Natural killer cell (primary cell): ENCODE measurements at regions of chr1 and their contacts with region 1.

Region 1: DNA sequence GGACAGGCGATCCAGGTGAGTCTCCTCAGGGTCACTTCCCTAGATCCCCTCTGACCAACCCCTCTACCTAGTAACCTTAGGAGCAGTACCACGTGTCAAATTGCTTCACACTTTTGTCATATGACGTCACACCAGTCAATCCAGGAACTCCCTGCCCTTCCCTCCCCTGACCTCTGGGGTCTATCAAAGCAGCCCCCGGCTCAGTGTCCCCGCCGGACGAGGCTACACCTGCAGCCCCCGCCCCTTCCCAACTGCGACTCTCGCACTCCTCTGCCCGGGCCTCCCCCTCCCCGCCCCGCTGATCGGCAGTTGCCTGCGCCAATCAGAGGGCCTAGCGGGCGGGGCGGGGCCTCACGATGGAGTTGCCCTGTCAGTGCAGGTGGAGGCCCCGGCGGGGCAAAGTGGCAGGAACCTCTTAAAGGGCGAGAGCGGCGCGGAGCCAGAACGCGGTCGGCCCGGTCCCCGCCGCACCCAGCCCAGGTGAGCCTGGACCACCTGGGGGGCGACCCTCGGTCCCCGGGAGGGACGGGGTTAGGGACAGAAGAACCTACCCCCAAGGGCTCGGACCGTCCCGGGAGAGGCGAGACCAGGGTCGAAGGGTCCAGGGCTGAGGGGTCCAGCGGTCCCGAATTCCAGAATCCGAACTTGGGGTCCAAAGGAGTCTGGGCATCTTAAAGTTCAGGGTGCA is 27.5 kb upstream of the EPB41 start:
- DNase-seq: peak; percentile 93 to 94
- ATAC-seq: peak; percentile 68 to 84 (median 74)
- H3K4me3 ChIP-seq: peak overlapping the region; percentile 97
- H3K4me3 Mint-ChIP-seq: peak overlapping the region; percentile 89
- H3K27ac ChIP-seq: peak overlapping the region; percentile 84
- H3K27ac Mint-ChIP-seq: peak overlapping the region; percentile 88 to 93
- H3K4me1 ChIP-seq: peaks cover 41% of the 10 kb centered on the region
- H3K4me1 Mint-ChIP-seq: peaks cover 53 to 63% of the 10 kb centered on the region in 2 donors
- H3K27me3 ChIP-seq: no peaks in the 10 kb centered on the region
- H3K27me3 Mint-ChIP-seq: no peaks in the 10 kb centered on the region
- CTCF ChIP-seq: no peak

Region 2: DNA sequence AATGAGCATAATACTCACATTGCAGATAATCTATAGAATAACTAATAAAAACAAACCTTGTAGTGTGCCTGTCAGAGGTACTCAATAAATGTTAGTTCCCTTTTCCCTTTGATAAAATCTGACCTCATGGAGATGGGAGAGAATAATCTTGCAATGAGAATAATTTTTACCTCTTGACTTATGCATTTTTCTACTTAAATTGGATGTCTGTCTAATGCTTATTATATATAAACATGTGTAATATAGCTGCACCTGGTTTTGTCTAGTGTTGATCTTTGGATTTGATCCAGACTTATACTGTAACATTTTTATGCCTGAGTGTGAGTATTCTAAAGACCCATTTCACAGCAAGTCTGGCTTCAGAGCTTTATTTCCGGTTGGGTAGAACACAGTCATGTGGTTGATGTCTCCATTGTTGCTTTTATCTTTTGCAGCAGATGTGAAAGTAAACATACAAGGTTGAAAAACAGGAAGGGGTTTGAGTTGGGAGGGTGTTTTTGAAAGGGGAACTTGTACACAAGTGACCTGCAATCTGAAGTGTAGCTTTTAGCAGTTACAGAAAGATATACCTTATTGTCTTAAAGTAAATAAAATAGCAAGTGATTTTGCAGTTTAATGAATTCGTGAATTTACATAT is 39.9 kb after region 1 on chr1:
- intact Hi-C with region 1: loop called (anchors 1 kb)
- DNase-seq: peak in 1 of 2 donors; percentile 89
- ATAC-seq: peak; percentile 85 to 94 (median 91)
- H3K4me3 ChIP-seq: peak overlapping the region; percentile 20
- H3K4me3 Mint-ChIP-seq: peak overlapping the region; percentile 87
- H3K27ac ChIP-seq: peak overlapping the region; percentile 80
- H3K27ac Mint-ChIP-seq: peak overlapping the region; percentile 89 to 98
- H3K4me1 ChIP-seq: peaks cover 58% of the 10 kb centered on the region
- H3K4me1 Mint-ChIP-seq: peaks cover 44 to 49% of the 10 kb centered on the region in 2 donors
- H3K27me3 ChIP-seq: no peaks in the 10 kb centered on the region
- H3K27me3 Mint-ChIP-seq: no peaks in the 10 kb centered on the region
- CTCF ChIP-seq: no peak

Region 3: DNA sequence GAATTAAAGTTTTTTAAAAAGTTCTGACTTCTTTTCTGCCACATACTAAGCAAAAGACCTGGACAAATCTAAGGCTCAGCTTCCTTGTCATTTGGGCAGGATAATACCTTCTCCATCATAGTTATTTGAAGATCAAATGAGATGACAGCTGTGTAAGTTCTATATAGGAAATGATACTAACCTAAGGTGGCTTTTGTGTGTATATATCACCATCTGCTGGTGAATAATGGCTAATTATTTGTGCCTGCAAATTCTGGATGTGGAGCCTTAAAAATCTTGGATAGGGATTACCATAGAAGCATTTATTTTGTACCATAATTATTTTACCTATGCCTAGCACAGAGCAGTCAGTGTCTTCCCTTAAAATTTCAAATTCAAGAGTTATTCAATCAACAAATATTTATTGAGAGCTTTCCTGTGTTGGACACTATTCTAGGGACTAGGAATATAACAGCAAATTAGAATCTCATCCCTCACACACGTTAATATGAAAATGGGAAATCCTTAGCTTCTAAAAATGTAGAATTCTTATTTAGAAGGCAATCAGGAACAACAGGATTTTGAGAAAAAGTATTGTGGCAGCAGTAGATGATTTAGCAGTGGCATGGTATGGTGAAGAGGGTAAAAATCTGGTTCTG is 147.1 kb after region 1 on chr1:
- intact Hi-C with region 1: loop called (anchors 1 kb)
- DNase-seq: peak in 1 of 2 donors; percentile 65
- ATAC-seq: peak; percentile 69 to 85 (median 69)
- H3K4me3 ChIP-seq: no peak overlapping the region
- H3K4me3 Mint-ChIP-seq: no peak overlapping the region
- H3K27ac ChIP-seq: no peak overlapping the region
- H3K27ac Mint-ChIP-seq: peak overlapping the region; percentile 60 to 77
- H3K4me1 ChIP-seq: no peaks in the 10 kb centered on the region
- H3K4me1 Mint-ChIP-seq: peaks cover 4 to 7% of the 10 kb centered on the region in 2 donors
- H3K27me3 ChIP-seq: no peaks in the 10 kb centered on the region
- H3K27me3 Mint-ChIP-seq: no peaks in the 10 kb centered on the region
- CTCF ChIP-seq: peak; percentile 78

Region 4: DNA sequence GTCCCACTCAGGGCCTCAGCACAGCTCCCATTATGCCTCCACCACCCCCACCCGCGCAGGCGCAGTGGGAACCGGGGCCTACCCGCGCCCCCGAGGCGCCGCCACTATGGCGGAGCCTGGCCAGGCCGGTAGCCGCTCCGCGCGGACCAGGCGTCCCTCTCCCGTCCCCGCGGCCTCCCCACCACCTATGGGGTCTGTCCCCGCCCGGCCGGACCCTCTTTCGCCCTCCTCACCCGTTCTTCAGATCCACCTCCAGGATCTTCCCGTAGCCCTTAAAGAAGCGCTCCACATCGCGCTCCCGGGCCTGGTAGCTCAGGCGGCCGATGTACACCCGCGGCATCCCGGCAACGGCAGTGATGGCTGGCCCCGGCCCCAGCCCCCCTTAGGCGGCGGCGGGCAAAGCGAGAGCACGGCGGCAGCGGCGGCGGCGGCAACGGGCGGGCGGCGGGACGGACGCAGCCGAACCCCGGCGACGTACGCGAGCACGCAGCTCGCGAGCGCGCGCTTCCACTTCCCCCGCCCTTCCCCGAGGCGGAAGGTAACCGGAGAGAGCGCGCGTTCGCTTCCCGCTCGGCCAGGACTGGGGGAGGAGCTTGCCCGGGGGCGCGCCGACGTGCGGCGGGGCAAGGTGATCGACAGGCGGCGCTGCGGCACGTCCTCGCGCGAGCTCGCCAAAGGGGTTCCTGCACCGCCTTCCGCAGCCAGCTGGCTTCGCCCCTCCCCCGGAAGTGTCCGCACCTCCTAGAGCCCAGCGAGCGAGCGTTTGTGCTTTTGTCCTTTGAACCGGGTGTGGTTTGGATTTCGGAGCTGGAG is 294.7 kb after region 1 on chr1 and contains the start of gene SRSF4:
- intact Hi-C with region 1: loop called (anchors 5 kb)
- DNase-seq: peak; percentile 99
- ATAC-seq: peak; percentile 91 to 98 (median 91)
- H3K4me3 ChIP-seq: peak within 1 kb of the TSS; percentile 100
- H3K4me3 Mint-ChIP-seq: peak within 1 kb of the TSS; percentile 93
- H3K27ac ChIP-seq: peak within 1 kb of the TSS; percentile 100
- H3K27ac Mint-ChIP-seq: peak within 1 kb of the TSS; percentile 94 to 95
- H3K4me1 ChIP-seq: peaks cover 30% of the 10 kb centered on the region
- H3K4me1 Mint-ChIP-seq: peaks cover 38 to 42% of the 10 kb centered on the region in 2 donors
- H3K27me3 ChIP-seq: no peaks in the 10 kb centered on the region
- H3K27me3 Mint-ChIP-seq: no peaks in the 10 kb centered on the region
- CTCF ChIP-seq: peak; percentile 71
- total RNA-seq, gene SRSF4: 90.2 to 114 (median 101) TPM